Esophagus squamous epithelium (tissue), 5 donors: ENCODE measurements at regions of chr2 and their contacts with region 1.

Region 1: GRCh38 chr2:127479219-127479825 is 47.0 kb downstream of the IWS1 start:
- DNase-seq: no peak
- H3K4me3 ChIP-seq: no peak overlapping the region
- H3K27ac ChIP-seq: no peak overlapping the region
- H3K4me1 ChIP-seq: no peaks in the 10 kb centered on the region
- H3K27me3 ChIP-seq: no peaks in the 10 kb centered on the region
- CTCF ChIP-seq: peak; percentile 38 to 68 (median 54)
- POLR2A ChIP-seq: no peak

Region 2: DNA sequence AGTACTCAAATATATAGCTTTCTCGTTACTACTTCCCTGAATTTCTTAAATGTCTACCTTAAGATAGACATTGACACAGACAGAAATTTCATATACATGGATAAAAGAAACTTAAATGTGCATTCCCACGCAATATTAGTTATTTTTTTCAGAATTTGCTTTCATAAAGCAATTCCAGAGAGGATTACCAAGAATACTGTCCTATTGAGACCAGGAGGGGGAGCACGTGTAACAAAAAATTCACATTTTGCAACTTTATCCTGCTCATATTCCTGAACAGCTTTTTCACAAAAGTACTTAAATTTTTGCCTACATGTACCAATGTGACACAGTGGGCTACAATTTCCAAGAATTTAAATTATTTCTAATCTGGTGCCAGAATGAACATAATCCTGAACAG is 154.7 kb before region 1 on chr2:
- intact Hi-C with region 1: loop called (anchors 10 kb)
- DNase-seq: no peak
- H3K4me3 ChIP-seq: no peak overlapping the region
- H3K27ac ChIP-seq: no peak overlapping the region
- H3K4me1 ChIP-seq: no peaks in the 10 kb centered on the region
- H3K27me3 ChIP-seq: no peaks in the 10 kb centered on the region
- CTCF ChIP-seq: peak in 5 of 6 experiments; percentile 34 to 63 (median 43)
- POLR2A ChIP-seq: no peak

Region 3: GRCh38 chr2:127770973-127771735 is 291.8 kb after region 1 on chr2:
- intact Hi-C with region 1: no loop called
- DNase-seq: no peak
- H3K4me3 ChIP-seq: no peak overlapping the region
- H3K27ac ChIP-seq: peak overlapping the region in 2 of 4 donors; percentile 10 to 17
- H3K4me1 ChIP-seq: peaks cover 0 to 48% (median 3%) of the 10 kb centered on the region in 3 donors
- H3K27me3 ChIP-seq: no peaks in the 10 kb centered on the region
- CTCF ChIP-seq: no peak
- POLR2A ChIP-seq: no peak